ENCODE measurements at regions of chr7 and their contacts with region 1.

Region 1: DNA sequence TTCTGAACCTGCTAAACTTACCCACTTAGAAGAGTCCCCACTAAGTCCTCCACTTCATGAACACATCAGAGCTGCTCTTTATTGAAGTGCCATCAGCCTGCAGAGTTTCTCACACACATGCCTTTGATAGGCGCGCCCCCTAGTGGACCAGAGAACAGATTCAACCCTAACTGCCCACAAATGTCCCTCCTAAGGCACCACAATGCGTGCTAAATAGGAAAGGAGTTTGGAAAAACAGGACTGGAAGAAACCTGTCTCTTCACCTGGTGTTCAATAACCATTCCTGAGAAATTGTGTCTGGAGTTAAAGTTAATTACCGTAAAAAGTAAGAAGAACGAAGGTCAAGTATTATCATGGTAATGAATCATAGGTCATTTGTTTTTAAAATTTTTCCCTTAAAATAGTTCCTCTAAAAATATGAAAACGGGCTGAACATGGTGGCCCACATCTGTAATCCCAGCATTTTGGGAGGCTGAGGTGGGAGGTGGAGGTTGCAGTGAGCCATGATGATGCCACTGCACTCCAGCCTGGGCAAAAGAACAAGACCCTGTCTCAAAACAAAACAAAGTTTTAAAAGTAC is 249.7 kb downstream of the ELMO1 start:
- DNase-seq: peak; percentile 95
- H3K4me3 ChIP-seq: no peak overlapping the region
- H3K27ac ChIP-seq: no peak overlapping the region
- H3K4me1 ChIP-seq: peaks cover 42 to 69% (median 63%) of the 10 kb centered on the region in 4 donors
- H3K27me3 ChIP-seq: no peaks in the 10 kb centered on the region
- CTCF ChIP-seq: peak; percentile 79 to 86 (median 84)
- EP300 ChIP-seq: no peak
- POLR2A ChIP-seq: no peak

Region 2: GRCh38 chr7:36487756-36488336 is 711.1 kb before region 1 on chr7:
- intact Hi-C with region 1: loop called (anchors 5 kb)
- DNase-seq: no peak
- H3K4me3 ChIP-seq: no peak overlapping the region
- H3K27ac ChIP-seq: no peak overlapping the region
- H3K4me1 ChIP-seq: peaks cover 0 to 8% (median 4%) of the 10 kb centered on the region in 4 donors
- H3K27me3 ChIP-seq: no peaks in the 10 kb centered on the region
- CTCF ChIP-seq: peak; percentile 62 to 70 (median 65)
- EP300 ChIP-seq: no peak
- POLR2A ChIP-seq: no peak

Region 3: GRCh38 chr7:36670585-36671431 is 528.2 kb before region 1 on chr7:
- intact Hi-C with region 1: loop called (anchors 5 kb)
- DNase-seq: no peak
- H3K4me3 ChIP-seq: no peak overlapping the region
- H3K27ac ChIP-seq: no peak overlapping the region
- H3K4me1 ChIP-seq: no peaks in the 10 kb centered on the region
- H3K27me3 ChIP-seq: no peaks in the 10 kb centered on the region
- CTCF ChIP-seq: peak; percentile 75 to 91 (median 84)
- EP300 ChIP-seq: no peak
- POLR2A ChIP-seq: no peak

Region 4: DNA sequence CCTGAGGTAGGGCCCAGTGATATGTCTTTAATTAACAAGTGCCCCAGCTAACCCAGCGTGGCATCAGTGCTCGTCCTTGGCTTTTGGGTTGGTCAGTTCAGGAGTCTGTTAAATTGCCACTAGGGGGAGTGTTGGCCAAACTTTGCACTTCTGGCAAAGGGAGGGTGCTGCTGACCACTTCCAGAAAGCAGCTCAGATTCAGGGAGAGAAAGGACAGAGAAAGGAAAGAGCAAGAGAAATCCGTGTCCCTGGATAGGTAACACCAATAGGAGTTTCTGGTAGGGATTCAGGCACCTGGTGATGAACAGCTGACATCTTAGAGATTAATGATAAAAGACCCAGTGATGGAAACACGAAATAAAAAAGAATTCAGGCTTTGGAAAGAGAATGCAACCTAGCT is 231.6 kb before region 1 on chr7:
- intact Hi-C with region 1: loop called (anchors 5 kb)
- DNase-seq: no peak
- H3K4me3 ChIP-seq: no peak overlapping the region
- H3K27ac ChIP-seq: peak overlapping the region; percentile 29 to 64 (median 56)
- H3K4me1 ChIP-seq: peaks cover 6 to 60% (median 48%) of the 10 kb centered on the region in 4 donors
- H3K27me3 ChIP-seq: no peaks in the 10 kb centered on the region
- CTCF ChIP-seq: peak; percentile 77 to 89 (median 85)
- EP300 ChIP-seq: no peak
- POLR2A ChIP-seq: no peak

Region 5: GRCh38 chr7:37275078-37275710 is 76.2 kb after region 1 on chr7:
- intact Hi-C with region 1: no loop called
- DNase-seq: no peak
- H3K4me3 ChIP-seq: no peak overlapping the region
- H3K27ac ChIP-seq: no peak overlapping the region
- H3K4me1 ChIP-seq: peaks cover 0 to 11% (median 2%) of the 10 kb centered on the region in 4 donors
- H3K27me3 ChIP-seq: no peaks in the 10 kb centered on the region
- CTCF ChIP-seq: no peak
- EP300 ChIP-seq: no peak
- POLR2A ChIP-seq: no peak

Measured in esophagus muscularis mucosa (tissue), 4 donors.